CD4-positive, alpha-beta memory T cell (primary cell): ENCODE measurements at regions of chr14 and their contacts with region 1.

Region 1: GRCh38 chr14:91893007-91893406 is 25.7 kb upstream of the TC2N start:
- DNase-seq: peak in 4 of 5 donors; percentile 30 to 48 (median 41)
- H3K4me3 ChIP-seq: no peak overlapping the region
- H3K4me3 Mint-ChIP-seq: peak overlapping the region in 2 of 8 donors; percentile 43 to 53
- H3K27ac ChIP-seq: no peak overlapping the region
- H3K27ac Mint-ChIP-seq: peak overlapping the region in 3 of 7 donors; percentile 9 to 38 (median 36)
- H3K4me1 ChIP-seq: peaks cover 54% of the 10 kb centered on the region
- H3K4me1 Mint-ChIP-seq: peaks cover 29 to 71% (median 48%) of the 10 kb centered on the region in 4 donors
- H3K27me3 ChIP-seq: no peaks in the 10 kb centered on the region
- H3K27me3 Mint-ChIP-seq: no peaks in the 10 kb centered on the region

Region 2: GRCh38 chr14:91786188-91786587 is 106.8 kb before region 1 on chr14:
- CTCF ChIA-PET with region 1: interaction called, 4 read pairs
- POLR2A ChIA-PET with region 1: no interaction called
- intact Hi-C with region 1: loop called (anchors 5 kb)
- DNase-seq: no peak
- H3K4me3 ChIP-seq: no peak overlapping the region
- H3K4me3 Mint-ChIP-seq: no peak overlapping the region
- H3K27ac ChIP-seq: no peak overlapping the region
- H3K27ac Mint-ChIP-seq: peak overlapping the region in 3 of 7 donors; percentile 43 to 48 (median 46)
- H3K4me1 ChIP-seq: no peaks in the 10 kb centered on the region
- H3K4me1 Mint-ChIP-seq: peaks cover 4 to 10% (median 8%) of the 10 kb centered on the region in 4 donors
- H3K27me3 ChIP-seq: no peaks in the 10 kb centered on the region
- H3K27me3 Mint-ChIP-seq: no peaks in the 10 kb centered on the region

Region 3: GRCh38 chr14:91836119-91836881 is 56.7 kb before region 1 on chr14:
- CTCF ChIA-PET with region 1: interaction called, 5 read pairs
- POLR2A ChIA-PET with region 1: interaction called, 6 read pairs
- intact Hi-C with region 1: loop called (anchors 5 kb)
- DNase-seq: peak; percentile 80 to 90 (median 83)
- H3K4me3 ChIP-seq: peak overlapping the region; percentile 34 to 63
- H3K4me3 Mint-ChIP-seq: peak overlapping the region; percentile 84 to 92 (median 88)
- H3K27ac ChIP-seq: peak overlapping the region; percentile 68
- H3K27ac Mint-ChIP-seq: peak overlapping the region; percentile 81 to 95 (median 91)
- H3K4me1 ChIP-seq: peaks cover 72% of the 10 kb centered on the region
- H3K4me1 Mint-ChIP-seq: peaks cover 64 to 94% (median 77%) of the 10 kb centered on the region in 4 donors
- H3K27me3 ChIP-seq: no peaks in the 10 kb centered on the region
- H3K27me3 Mint-ChIP-seq: no peaks in the 10 kb centered on the region

Region 4: GRCh38 chr14:91929700-91930099 is 36.7 kb after region 1 on chr14:
- CTCF ChIA-PET with region 1: no interaction called
- POLR2A ChIA-PET with region 1: no interaction called
- intact Hi-C with region 1: no loop called
- DNase-seq: no peak
- H3K4me3 ChIP-seq: no peak overlapping the region
- H3K4me3 Mint-ChIP-seq: no peak overlapping the region
- H3K27ac ChIP-seq: no peak overlapping the region
- H3K27ac Mint-ChIP-seq: peak overlapping the region in 1 of 7 donors; percentile 8
- H3K4me1 ChIP-seq: no peaks in the 10 kb centered on the region
- H3K4me1 Mint-ChIP-seq: no peaks in the 10 kb centered on the region
- H3K27me3 ChIP-seq: no peaks in the 10 kb centered on the region
- H3K27me3 Mint-ChIP-seq: peaks cover 0 to 2% of the 10 kb centered on the region in 2 donors